Activated CD4-positive, alpha-beta T cell treated with anti-CD3 and anti-CD28 coated beads for 36 hours (primary cell): ENCODE measurements at regions of chr1 and their contacts with region 1.

Region 1: GRCh38 chr1:110963691-110964399 is at the start of gene LRIF1:
- DNase-seq: peak; percentile 100
- ATAC-seq: peak; percentile 99
- H3K4me3 Mint-ChIP-seq: peak within 1 kb of the TSS; percentile 78
- H3K27ac Mint-ChIP-seq: peak within 1 kb of the TSS; percentile 94
- H3K4me1 Mint-ChIP-seq: peaks cover 30% of the 10 kb centered on the region
- H3K27me3 Mint-ChIP-seq: peaks cover 7% of the 10 kb centered on the region
- total RNA-seq, gene LRIF1: 15.1 to 15.4 TPM

Region 2: GRCh38 chr1:110630839-110631663 is 332.8 kb before region 1 on chr1:
- CTCF ChIA-PET with region 1: no interaction called
- POLR2A ChIA-PET with region 1: no interaction called
- intact Hi-C with region 1: loop called in 1 of 2 experiments (anchors 5 kb)
- DNase-seq: peak; percentile 93
- ATAC-seq: peak; percentile 76
- H3K4me3 Mint-ChIP-seq: no peak overlapping the region
- H3K27ac Mint-ChIP-seq: no peak overlapping the region
- H3K4me1 Mint-ChIP-seq: peaks cover 55% of the 10 kb centered on the region
- H3K27me3 Mint-ChIP-seq: no peaks in the 10 kb centered on the region

Region 3: GRCh38 chr1:110872745-110873720 is 90.8 kb before region 1 on chr1 and contains the start of gene CD53:
- CTCF ChIA-PET with region 1: interaction called, 8 read pairs
- POLR2A ChIA-PET with region 1: interaction called, 8 read pairs
- intact Hi-C with region 1: loop called in 1 of 2 experiments (anchors 1 kb)
- DNase-seq: peak; percentile 62
- ATAC-seq: peak; percentile 33
- H3K4me3 Mint-ChIP-seq: peak within 1 kb of the TSS; percentile 85
- H3K27ac Mint-ChIP-seq: peak within 1 kb of the TSS; percentile 95
- H3K4me1 Mint-ChIP-seq: peaks cover 39% of the 10 kb centered on the region
- H3K27me3 Mint-ChIP-seq: no peaks in the 10 kb centered on the region
- total RNA-seq, gene CD53: 238 to 244 TPM

Region 4: GRCh38 chr1:110896090-110896489 is 67.8 kb before region 1 on chr1:
- CTCF ChIA-PET with region 1: interaction called, 3 read pairs
- POLR2A ChIA-PET with region 1: no interaction called
- intact Hi-C with region 1: loop called in 1 of 2 experiments (anchors 5 kb)
- DNase-seq: no peak
- ATAC-seq: no peak
- H3K4me3 Mint-ChIP-seq: no peak overlapping the region
- H3K27ac Mint-ChIP-seq: peak overlapping the region; percentile 88
- H3K4me1 Mint-ChIP-seq: peaks cover 84% of the 10 kb centered on the region
- H3K27me3 Mint-ChIP-seq: no peaks in the 10 kb centered on the region

Region 5: GRCh38 chr1:110916669-110917306 is 47.1 kb before region 1 on chr1:
- CTCF ChIA-PET with region 1: no interaction called
- POLR2A ChIA-PET with region 1: interaction called, 3 read pairs
- intact Hi-C with region 1: loop called in 1 of 2 experiments (anchors 5 kb)
- DNase-seq: peak; percentile 56
- ATAC-seq: peak; percentile 87
- H3K4me3 Mint-ChIP-seq: no peak overlapping the region
- H3K27ac Mint-ChIP-seq: peak overlapping the region; percentile 33
- H3K4me1 Mint-ChIP-seq: peaks cover 11% of the 10 kb centered on the region
- H3K27me3 Mint-ChIP-seq: no peaks in the 10 kb centered on the region